ENCODE measurements at regions of chr12 and their contacts with region 1.

Region 1: GRCh38 chr12:108633534-108634248 is at the start of gene SELPLG:
- DNase-seq: peak; percentile 99
- ATAC-seq: peak; percentile 64
- H3K4me3 ChIP-seq: peak within 1 kb of the TSS; percentile 76
- H3K27ac ChIP-seq: peak within 1 kb of the TSS; percentile 86
- H3K4me1 ChIP-seq: peaks cover 87% of the 10 kb centered on the region
- H3K27me3 ChIP-seq: no peaks in the 10 kb centered on the region
- CTCF ChIP-seq: peak; percentile 32 to 41 (median 36); a peak in 3 of 6 replicates
- EP300 ChIP-seq: peak; percentile 99
- POLR2A ChIP-seq: peak; percentile 77
- RAD21 ChIP-seq: no peak; the same call in 1 of the 2 replicates
- polyA plus RNA-seq, gene SELPLG: 3.2 to 5.3 TPM

Region 2: GRCh38 chr12:108570743-108571608 is 62.7 kb before region 1 on chr12:
- CTCF ChIA-PET with region 1: interaction called, 244 read pairs
- POLR2A ChIA-PET with region 1: interaction called, 199 read pairs
- RAD21 ChIA-PET with region 1: interaction called, 413 read pairs
- SMC1A ChIA-PET with region 1: interaction called, 397 read pairs
- in situ Hi-C with region 1: no loop called
- intact Hi-C with region 1: loop called (anchors 1 kb)
- DNase-seq: no peak
- ATAC-seq: no peak
- H3K4me3 ChIP-seq: no peak overlapping the region
- H3K27ac ChIP-seq: peak overlapping the region; percentile 100
- H3K4me1 ChIP-seq: peaks cover 89% of the 10 kb centered on the region
- H3K27me3 ChIP-seq: no peaks in the 10 kb centered on the region
- CTCF ChIP-seq: peak; percentile 42 to 53 (median 49); a peak in 4 of 6 replicates
- EP300 ChIP-seq: 0 out of 4 replicates have a peak, but pooled peaks of 1 of the 2 experiments have one; percentile 10
- POLR2A ChIP-seq: no peak
- RAD21 ChIP-seq: peak; percentile 66

Region 3: GRCh38 chr12:108583991-108584390 is 49.7 kb before region 1 on chr12:
- CTCF ChIA-PET with region 1: no interaction called
- POLR2A ChIA-PET with region 1: no interaction called
- RAD21 ChIA-PET with region 1: no interaction called
- SMC1A ChIA-PET with region 1: no interaction called
- in situ Hi-C with region 1: no loop called
- intact Hi-C with region 1: no loop called
- DNase-seq: no peak
- ATAC-seq: no peak
- H3K4me3 ChIP-seq: no peak overlapping the region
- H3K27ac ChIP-seq: no peak overlapping the region
- H3K4me1 ChIP-seq: no peaks in the 10 kb centered on the region; the same call in 1 of the 2 replicates
- H3K27me3 ChIP-seq: no peaks in the 10 kb centered on the region
- CTCF ChIP-seq: no peak
- EP300 ChIP-seq: no peak
- POLR2A ChIP-seq: no peak
- RAD21 ChIP-seq: no peak

Region 4: DNA sequence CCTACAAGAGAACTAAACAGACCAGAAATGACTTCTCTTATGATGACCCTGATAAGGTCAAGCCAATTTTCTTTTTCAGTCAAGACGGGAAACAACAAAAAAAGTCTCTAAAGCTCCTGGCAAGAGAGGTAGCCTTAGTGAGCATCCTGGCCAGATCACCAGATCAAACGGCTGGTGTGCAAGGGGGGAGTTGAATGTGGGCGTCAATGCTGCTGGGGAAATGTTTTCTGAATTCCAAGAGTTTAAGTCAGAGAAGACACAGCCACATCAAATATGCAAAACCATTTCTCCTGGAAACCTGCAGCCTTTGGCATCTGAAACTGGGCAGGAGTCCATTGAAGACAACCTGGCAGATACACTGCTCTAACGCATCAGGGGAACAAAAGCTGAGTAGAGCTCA is 16.0 kb after region 1 on chr12:
- CTCF ChIA-PET with region 1: interaction called, 5 read pairs
- POLR2A ChIA-PET with region 1: interaction called, 5 read pairs
- RAD21 ChIA-PET with region 1: interaction called, 8 read pairs
- SMC1A ChIA-PET with region 1: interaction called, 15 read pairs
- in situ Hi-C with region 1: no loop called
- intact Hi-C with region 1: no loop called
- DNase-seq: no peak
- ATAC-seq: no peak
- H3K4me3 ChIP-seq: no peak overlapping the region
- H3K27ac ChIP-seq: no peak overlapping the region
- H3K4me1 ChIP-seq: no peaks in the 10 kb centered on the region
- H3K27me3 ChIP-seq: no peaks in the 10 kb centered on the region
- CTCF ChIP-seq: no peak
- EP300 ChIP-seq: no peak
- POLR2A ChIP-seq: no peak
- RAD21 ChIP-seq: no peak

Region 5: DNA sequence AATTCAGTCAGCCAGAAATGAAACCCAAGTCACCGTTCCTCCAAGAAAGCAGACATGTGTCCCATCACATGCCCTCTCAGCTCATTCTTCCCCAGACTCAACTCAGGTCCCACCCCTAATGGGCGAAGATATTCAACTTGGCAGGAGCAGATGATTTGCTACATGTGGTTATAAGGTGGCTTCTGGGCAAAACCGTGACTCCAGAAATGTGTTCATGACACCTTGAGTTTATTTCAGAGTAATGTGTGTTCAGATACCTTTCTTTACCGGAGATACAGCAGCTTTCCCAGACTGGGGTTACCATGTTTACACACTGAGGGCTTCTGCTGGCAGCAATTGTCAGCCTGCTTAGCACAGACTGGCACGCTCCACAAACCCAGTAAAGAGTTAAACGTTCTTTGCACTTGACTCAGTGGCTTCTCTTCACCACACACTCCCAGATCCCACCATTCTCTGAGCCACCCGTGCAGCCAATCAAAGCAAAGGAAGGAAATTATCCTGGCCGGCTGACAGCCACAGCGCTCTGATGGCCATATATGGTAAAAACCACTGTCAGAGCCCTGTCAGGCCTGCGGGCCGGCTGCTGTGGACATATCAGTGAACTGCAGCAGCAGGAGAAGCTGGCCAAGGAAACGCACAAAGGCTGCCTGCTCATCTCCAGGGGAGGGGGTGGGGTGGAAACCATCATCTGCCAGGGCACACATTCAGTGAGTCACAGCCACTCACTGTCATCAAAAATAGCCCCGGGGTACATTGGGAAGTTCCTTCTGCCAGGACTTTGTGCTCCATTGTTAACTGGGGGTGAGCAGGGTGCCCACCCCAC is 57.7 kb after region 1 on chr12:
- CTCF ChIA-PET with region 1: interaction called, 6 read pairs
- POLR2A ChIA-PET with region 1: interaction called, 6 read pairs
- RAD21 ChIA-PET with region 1: interaction called, 17 read pairs
- SMC1A ChIA-PET with region 1: interaction called, 15 read pairs
- in situ Hi-C with region 1: no loop called
- intact Hi-C with region 1: loop called (anchors 2 kb)
- DNase-seq: peak; percentile 63
- ATAC-seq: peak; percentile 90
- H3K4me3 ChIP-seq: peak overlapping the region; percentile 62; the same call in 1 of the 2 replicates
- H3K27ac ChIP-seq: peak overlapping the region; percentile 97
- H3K4me1 ChIP-seq: peaks cover 66% of the 10 kb centered on the region
- H3K27me3 ChIP-seq: no peaks in the 10 kb centered on the region
- CTCF ChIP-seq: peak in 2 of 3 experiments; percentile 24 to 37; a peak in 2 of 6 replicates
- EP300 ChIP-seq: 0 out of 4 replicates have a peak, but pooled peaks of 1 of the 2 experiments have one; percentile 29
- POLR2A ChIP-seq: peak; percentile 27; the same call in 1 of the 2 replicates
- RAD21 ChIP-seq: no peak

Region 6: GRCh38 chr12:108768591-108769500 is 135.2 kb after region 1 on chr12:
- CTCF ChIA-PET with region 1: no interaction called
- POLR2A ChIA-PET with region 1: interaction called, 4 read pairs
- RAD21 ChIA-PET with region 1: interaction called, 4 read pairs
- SMC1A ChIA-PET with region 1: no interaction called
- in situ Hi-C with region 1: no loop called
- intact Hi-C with region 1: loop called (anchors 1 kb)
- DNase-seq: peak; percentile 17
- ATAC-seq: peak; percentile 86
- H3K4me3 ChIP-seq: 0 out of 2 replicates have a peak overlapping the region, but pooled peaks have one; percentile 10
- H3K27ac ChIP-seq: no peak overlapping the region
- H3K4me1 ChIP-seq: peaks cover 29% of the 10 kb centered on the region
- H3K27me3 ChIP-seq: no peaks in the 10 kb centered on the region
- CTCF ChIP-seq: 0 out of 6 replicates have a peak, but pooled peaks of 1 of the 3 experiments have one; percentile 0
- EP300 ChIP-seq: no peak
- POLR2A ChIP-seq: no peak
- RAD21 ChIP-seq: no peak

Region 7: DNA sequence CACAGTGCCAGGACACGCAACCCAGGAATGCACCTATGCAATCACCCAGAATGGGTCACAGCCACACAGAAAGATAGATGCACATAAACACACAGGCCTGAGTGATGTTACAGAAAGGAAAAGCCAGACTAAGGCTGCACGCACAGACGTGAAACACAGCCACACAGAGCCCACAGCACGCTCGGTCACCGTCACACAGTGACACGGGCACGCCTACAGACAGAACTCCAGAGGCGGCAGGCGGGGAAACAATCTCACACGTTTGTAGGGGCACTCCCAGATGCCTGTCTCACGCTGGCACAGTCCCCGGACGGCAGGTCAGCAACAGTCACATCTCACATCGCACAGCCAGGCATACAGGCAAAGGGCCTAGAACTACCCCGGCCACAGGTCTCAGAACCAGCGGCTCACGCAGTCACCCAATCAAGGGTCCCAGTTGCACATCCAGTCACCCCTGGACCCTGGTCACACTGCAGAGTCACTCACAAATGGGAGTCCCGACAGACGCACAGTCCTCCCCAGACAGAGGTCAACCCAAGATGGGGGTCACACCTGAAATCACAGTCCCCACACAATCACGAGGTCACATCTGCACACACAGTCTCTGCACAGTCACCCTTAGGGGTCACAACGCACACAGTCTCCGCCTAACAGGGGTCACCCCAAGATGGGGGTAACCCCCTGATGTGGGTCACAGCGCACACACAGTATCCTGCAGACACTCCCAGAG is 222.9 kb after region 1 on chr12:
- CTCF ChIA-PET with region 1: interaction called, 5 read pairs
- POLR2A ChIA-PET with region 1: interaction called, 3 read pairs
- RAD21 ChIA-PET with region 1: interaction called, 22 read pairs
- SMC1A ChIA-PET with region 1: interaction called, 5 read pairs
- in situ Hi-C with region 1: no loop called
- intact Hi-C with region 1: loop called (anchors 2 kb)
- DNase-seq: no peak
- ATAC-seq: peak; percentile 37
- H3K4me3 ChIP-seq: peak overlapping the region; percentile 93
- H3K27ac ChIP-seq: peak overlapping the region; percentile 79
- H3K4me1 ChIP-seq: peaks cover 52% of the 10 kb centered on the region
- H3K27me3 ChIP-seq: no peaks in the 10 kb centered on the region
- CTCF ChIP-seq: peak in 1 of 3 experiments; percentile 5; a peak in 1 of 6 replicates
- EP300 ChIP-seq: peak; percentile 64 to 77; a peak in 3 of 4 replicates
- POLR2A ChIP-seq: no peak
- RAD21 ChIP-seq: no peak